ENCODE measurements at regions of chr20 and their contacts with region 1.

Region 1: DNA sequence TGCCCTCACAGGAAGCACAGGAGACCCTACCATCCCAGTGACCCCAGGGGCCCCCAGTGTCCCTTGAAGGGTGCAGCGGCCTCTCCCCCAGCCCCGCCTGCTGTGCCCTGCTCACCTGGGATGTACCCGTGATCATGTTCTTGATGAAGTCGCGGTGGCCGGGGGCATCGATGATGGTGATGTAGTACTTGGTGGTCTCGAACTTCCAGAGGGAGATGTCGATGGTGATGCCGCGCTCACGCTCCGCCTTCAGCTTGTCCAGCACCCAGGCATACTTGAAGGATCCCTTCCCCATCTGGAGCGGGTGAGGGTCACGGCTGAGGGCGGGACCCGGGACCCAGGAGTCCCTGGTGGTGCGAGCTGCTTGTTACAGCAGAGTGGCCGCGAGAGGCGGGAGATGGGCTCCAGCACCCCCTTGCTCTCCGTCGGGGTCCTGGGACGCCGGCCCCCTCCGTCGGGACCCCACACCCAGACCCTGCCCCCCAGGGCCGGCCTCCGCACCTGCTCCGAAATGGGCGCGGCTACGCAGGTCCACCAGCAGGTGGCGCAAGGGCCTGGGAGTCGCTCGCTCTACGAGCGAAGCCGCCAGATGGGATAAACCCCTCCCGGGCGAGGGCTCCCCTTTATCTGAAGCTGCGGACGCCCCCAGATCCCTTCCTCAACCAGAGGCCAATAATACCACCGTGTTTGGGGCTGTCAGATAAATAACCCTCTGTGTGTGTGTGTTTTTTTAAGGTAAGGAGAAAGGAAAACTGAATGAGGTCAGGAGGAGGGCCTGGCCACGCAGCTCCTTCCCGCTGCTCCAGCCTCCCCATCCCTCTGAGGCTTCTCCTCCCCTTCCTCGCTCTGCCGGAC is 2.9 kb downstream of the EEF1A2 start:
- DNase-seq: peak; percentile 78
- ATAC-seq: peak; percentile 70
- H3K4me3 Mint-ChIP-seq: peak overlapping the region; percentile 34
- H3K27ac Mint-ChIP-seq: no peak overlapping the region
- H3K4me1 Mint-ChIP-seq: peaks cover 8% of the 10 kb centered on the region
- H3K27me3 Mint-ChIP-seq: peaks cover 21% of the 10 kb centered on the region

Region 2: DNA sequence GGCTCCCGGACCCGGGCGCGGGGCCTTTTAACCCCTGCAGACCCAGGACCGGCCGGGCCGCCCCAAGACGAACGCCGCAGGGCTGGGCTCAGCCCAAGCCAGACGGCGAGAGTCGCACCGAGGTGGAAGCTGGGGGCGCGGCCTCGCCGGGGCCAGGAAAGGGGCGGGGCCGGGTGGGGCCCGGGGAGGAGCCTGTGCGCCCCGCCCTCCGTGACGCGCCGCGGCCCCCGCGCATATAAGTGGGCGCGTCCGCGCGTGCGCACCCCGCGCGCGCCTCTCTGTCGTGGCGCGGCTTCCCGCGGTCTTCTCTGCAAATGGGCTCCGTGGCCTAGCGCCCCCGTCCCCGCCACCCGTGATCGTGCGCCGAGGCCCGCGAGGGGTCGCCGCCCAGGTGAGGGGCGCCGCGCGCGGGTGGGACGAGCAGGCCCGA is 24.6 kb after region 1 on chr20 and contains the start of gene PPDPF:
- CTCF ChIA-PET with region 1: interaction called, 13 read pairs
- POLR2A ChIA-PET with region 1: interaction called, 11 read pairs
- DNase-seq: peak; percentile 87
- ATAC-seq: peak; percentile 83
- H3K4me3 Mint-ChIP-seq: peak within 1 kb of the TSS; percentile 77
- H3K27ac Mint-ChIP-seq: peak within 1 kb of the TSS; percentile 81
- H3K4me1 Mint-ChIP-seq: peaks cover 9% of the 10 kb centered on the region
- H3K27me3 Mint-ChIP-seq: peaks cover 8% of the 10 kb centered on the region
- total RNA-seq, gene PPDPF: 292 to 296 TPM

Region 3: GRCh38 chr20:63711085-63711645 is 215.2 kb after region 1 on chr20:
- CTCF ChIA-PET with region 1: no interaction called
- POLR2A ChIA-PET with region 1: no interaction called
- DNase-seq: no peak
- ATAC-seq: no peak
- H3K4me3 Mint-ChIP-seq: no peak overlapping the region
- H3K27ac Mint-ChIP-seq: no peak overlapping the region
- H3K4me1 Mint-ChIP-seq: peaks cover 45% of the 10 kb centered on the region
- H3K27me3 Mint-ChIP-seq: no peaks in the 10 kb centered on the region